ENCODE measurements at regions of chr18 and their contacts with region 1.

Region 1: DNA sequence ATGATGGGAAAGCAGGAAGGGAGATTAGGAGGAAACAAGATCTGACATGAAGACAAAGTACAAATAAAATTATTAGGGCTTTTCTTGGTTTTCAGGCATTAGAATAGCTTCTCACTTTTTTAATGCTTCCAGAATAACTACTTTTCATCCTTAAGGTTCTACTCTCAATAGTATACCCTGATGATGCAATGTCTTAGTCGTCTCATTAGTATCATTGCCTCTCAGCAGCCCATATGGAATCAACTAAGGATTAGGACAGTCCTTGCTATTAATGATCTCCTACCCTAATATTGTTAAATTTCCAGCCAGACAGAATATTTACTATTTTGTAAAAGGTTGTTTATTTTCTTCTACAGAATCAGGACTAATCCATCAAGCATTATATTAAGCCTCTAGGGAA is 55.9 kb downstream of the RELCH start:
- DNase-seq: no peak
- ATAC-seq: no peak
- H3K4me3 ChIP-seq: no peak overlapping the region
- H3K4me3 Mint-ChIP-seq: no peak overlapping the region
- H3K27ac ChIP-seq: no peak overlapping the region
- H3K27ac Mint-ChIP-seq: peak overlapping the region; percentile 7
- H3K4me1 ChIP-seq: no peaks in the 10 kb centered on the region
- H3K4me1 Mint-ChIP-seq: peaks cover 2% of the 10 kb centered on the region
- H3K27me3 ChIP-seq: no peaks in the 10 kb centered on the region
- H3K27me3 Mint-ChIP-seq: no peaks in the 10 kb centered on the region
- CTCF ChIP-seq: no peak

Region 2: DNA sequence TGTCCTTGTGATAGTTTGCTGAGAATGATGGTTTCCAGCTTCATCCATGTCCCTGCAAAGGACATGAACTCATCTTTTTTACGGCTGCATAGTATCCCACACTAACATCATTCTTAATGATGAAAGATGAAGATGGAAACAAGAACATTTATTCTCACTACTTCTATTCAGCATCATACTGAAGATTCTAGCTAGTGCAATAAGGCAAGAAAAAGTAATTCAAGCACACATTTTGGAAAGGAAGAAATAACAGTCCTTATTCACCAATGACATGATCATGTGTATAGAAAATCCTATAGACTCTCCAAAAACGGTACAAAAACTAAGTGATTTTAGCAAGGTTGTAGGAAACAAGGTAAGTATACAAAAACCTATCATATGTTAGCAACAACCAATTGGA is 18.7 kb before region 1 on chr18:
- CTCF ChIA-PET with region 1: no interaction called
- POLR2A ChIA-PET with region 1: no interaction called
- intact Hi-C with region 1: loop called in 1 of 2 experiments (anchors 2 kb)
- DNase-seq: no peak
- ATAC-seq: no peak
- H3K4me3 ChIP-seq: no peak overlapping the region
- H3K4me3 Mint-ChIP-seq: no peak overlapping the region
- H3K27ac ChIP-seq: no peak overlapping the region
- H3K27ac Mint-ChIP-seq: no peak overlapping the region
- H3K4me1 ChIP-seq: no peaks in the 10 kb centered on the region
- H3K4me1 Mint-ChIP-seq: peaks cover 3% of the 10 kb centered on the region
- H3K27me3 ChIP-seq: no peaks in the 10 kb centered on the region
- H3K27me3 Mint-ChIP-seq: no peaks in the 10 kb centered on the region
- CTCF ChIP-seq: no peak

Region 3: GRCh38 chr18:63648241-63648640 is 1405.3 kb after region 1 on chr18:
- CTCF ChIA-PET with region 1: no interaction called
- POLR2A ChIA-PET with region 1: no interaction called
- intact Hi-C with region 1: no loop called
- DNase-seq: no peak
- ATAC-seq: no peak
- H3K4me3 ChIP-seq: no peak overlapping the region
- H3K4me3 Mint-ChIP-seq: no peak overlapping the region
- H3K27ac ChIP-seq: no peak overlapping the region
- H3K27ac Mint-ChIP-seq: no peak overlapping the region
- H3K4me1 ChIP-seq: no peaks in the 10 kb centered on the region
- H3K4me1 Mint-ChIP-seq: no peaks in the 10 kb centered on the region
- H3K27me3 ChIP-seq: no peaks in the 10 kb centered on the region
- H3K27me3 Mint-ChIP-seq: peaks cover 2% of the 10 kb centered on the region
- CTCF ChIP-seq: no peak

Measured in CD8-positive, alpha-beta T cell (primary cell).